B cell (primary cell): ENCODE measurements at regions of chr1 and their contacts with region 1.

Region 1: DNA sequence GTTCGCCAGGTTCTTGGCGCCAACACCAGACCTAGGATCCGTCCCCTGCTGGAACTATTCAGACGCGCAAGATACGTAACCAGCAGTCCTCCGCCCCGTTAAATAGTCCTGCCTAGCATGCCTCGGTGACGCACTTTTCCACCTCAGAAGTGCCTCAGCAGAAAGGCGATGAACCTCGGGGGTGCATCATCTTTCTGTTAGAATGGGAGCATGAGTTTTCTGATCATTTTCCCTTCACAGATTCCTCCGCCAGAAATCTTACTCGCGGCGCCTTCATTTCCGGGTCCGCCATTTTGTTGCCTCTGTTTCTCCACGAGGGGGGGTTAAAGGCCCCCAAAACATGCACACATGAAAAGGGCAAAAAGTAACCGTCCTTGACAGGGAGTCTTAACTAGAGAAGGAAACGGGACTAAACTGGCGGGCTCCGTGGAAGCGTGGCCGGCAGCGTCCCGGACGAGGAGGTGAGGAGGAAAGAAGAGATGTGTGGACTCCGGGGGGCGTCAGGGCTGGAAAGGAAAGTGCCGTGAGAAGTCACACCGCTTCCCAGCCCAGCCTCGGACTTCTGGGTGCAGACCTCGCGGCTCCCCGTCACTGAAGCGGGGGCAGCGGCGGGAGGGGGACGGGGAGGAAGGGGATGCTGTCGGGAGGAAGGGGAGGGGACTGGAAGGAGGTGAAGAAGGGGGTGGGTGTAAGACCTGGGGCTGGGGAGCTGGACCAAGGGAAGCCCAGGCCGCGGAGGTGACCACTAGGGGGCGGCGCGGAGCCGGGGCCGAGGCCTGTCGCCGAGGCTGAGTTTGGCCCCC is at the start of gene GABPB2:
- DNase-seq: peak; percentile 94
- ATAC-seq: peak; percentile 89
- H3K4me3 ChIP-seq: peak within 1 kb of the TSS; percentile 88 to 99 (median 98)
- H3K4me3 Mint-ChIP-seq: peak within 1 kb of the TSS; percentile 97
- H3K27ac ChIP-seq: peak within 1 kb of the TSS; percentile 93 to 96
- H3K27ac Mint-ChIP-seq: peak within 1 kb of the TSS; percentile 100
- H3K4me1 ChIP-seq: peaks cover 13 to 18% of the 10 kb centered on the region in 2 donors
- H3K4me1 Mint-ChIP-seq: peaks cover 17% of the 10 kb centered on the region
- H3K27me3 ChIP-seq: no peaks in the 10 kb centered on the region
- H3K27me3 Mint-ChIP-seq: no peaks in the 10 kb centered on the region
- CTCF ChIP-seq: peak; percentile 93
- total RNA-seq, gene GABPB2: 22.4 and 22.9 TPM in 2 replicates

Region 2: GRCh38 chr1:150708595-150708994 is 362.1 kb before region 1 on chr1:
- CTCF ChIA-PET with region 1: no interaction called
- POLR2A ChIA-PET with region 1: no interaction called
- intact Hi-C with region 1: no loop called
- DNase-seq: no peak
- ATAC-seq: no peak
- H3K4me3 ChIP-seq: no peak overlapping the region
- H3K4me3 Mint-ChIP-seq: no peak overlapping the region
- H3K27ac ChIP-seq: no peak overlapping the region
- H3K27ac Mint-ChIP-seq: no peak overlapping the region
- H3K4me1 ChIP-seq: no peaks in the 10 kb centered on the region
- H3K4me1 Mint-ChIP-seq: no peaks in the 10 kb centered on the region
- H3K27me3 ChIP-seq: no peaks in the 10 kb centered on the region
- H3K27me3 Mint-ChIP-seq: no peaks in the 10 kb centered on the region
- CTCF ChIP-seq: no peak

Region 3: DNA sequence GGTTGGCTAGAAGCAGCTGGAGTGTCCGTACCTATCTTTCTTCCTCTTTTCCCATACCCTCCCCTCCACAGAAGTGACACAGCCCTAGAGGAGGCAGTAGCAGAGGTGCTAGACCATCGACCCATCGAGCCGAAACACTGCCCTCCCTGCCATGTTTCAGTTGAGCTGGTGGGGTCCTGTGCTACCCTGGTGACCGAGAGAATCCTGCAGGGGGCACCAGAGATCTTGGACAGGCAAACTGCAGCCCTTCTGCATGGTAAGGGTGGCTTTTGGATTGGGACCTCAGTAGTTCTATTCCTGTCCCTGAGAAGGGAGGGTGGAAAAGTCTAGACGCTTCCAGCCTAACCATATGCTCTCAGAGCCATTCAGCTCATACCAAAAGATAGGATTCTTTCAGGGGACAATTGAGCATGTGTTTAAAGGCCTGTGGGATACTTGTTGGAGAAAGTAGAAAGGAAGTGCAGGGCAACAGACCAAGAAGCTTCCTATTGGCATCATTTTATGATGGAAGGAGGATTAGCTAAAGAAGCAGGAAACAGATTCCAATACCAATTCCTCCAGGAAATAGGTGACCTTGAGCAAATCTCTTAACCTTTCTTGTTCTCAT is 46.0 kb before region 1 on chr1:
- CTCF ChIA-PET with region 1: interaction called, 11 read pairs
- POLR2A ChIA-PET with region 1: interaction called, 7 read pairs
- intact Hi-C with region 1: loop called (anchors 2 kb)
- DNase-seq: peak; percentile 86
- ATAC-seq: peak; percentile 98
- H3K4me3 ChIP-seq: no peak overlapping the region
- H3K4me3 Mint-ChIP-seq: no peak overlapping the region
- H3K27ac ChIP-seq: no peak overlapping the region
- H3K27ac Mint-ChIP-seq: peak overlapping the region; percentile 72
- H3K4me1 ChIP-seq: peaks cover 0 to 5% of the 10 kb centered on the region in 2 donors
- H3K4me1 Mint-ChIP-seq: peaks cover 6% of the 10 kb centered on the region
- H3K27me3 ChIP-seq: no peaks in the 10 kb centered on the region
- H3K27me3 Mint-ChIP-seq: no peaks in the 10 kb centered on the region
- CTCF ChIP-seq: peak; percentile 85

Region 4: DNA sequence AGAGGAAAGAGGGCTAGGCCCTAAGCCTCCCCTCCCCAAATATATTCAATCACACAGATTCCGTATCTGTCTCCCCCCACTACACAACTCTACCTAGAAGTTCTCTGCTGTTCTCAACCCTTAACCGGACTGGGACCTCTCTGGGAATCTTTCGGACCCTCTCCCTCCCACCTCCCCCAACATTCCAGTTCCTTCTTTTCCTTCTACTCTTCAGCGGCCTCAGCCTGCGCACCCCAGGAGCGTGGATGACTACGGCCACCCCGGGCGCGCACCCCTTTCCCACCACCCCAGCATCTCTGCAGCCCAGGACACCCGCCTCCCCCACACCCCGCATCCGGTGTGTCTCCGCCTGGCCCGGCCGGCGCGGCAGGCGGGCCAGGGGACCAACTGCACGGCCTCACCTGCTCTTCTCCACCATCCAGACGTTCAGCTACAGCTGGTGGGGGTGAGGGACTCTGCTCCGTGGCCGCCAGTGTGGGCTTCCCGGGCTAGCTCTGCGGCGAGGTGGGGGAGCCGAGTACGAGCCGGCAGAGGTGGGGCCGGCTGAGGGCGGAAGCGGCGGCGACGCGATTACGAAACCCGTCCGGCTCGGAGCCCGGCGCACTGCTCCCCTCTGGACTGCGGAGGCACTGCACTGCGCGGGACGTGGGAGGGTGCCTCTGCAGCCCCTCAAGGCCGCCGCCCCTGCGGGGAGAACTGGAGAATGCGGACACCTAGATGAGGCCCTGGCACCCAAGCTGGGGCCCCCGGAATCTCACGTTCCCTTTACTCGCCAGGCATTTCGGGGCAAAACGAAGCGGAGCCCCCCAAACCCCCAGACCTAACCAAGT is 11.4 kb before region 1 on chr1 and contains the start of gene CDC42SE1:
- CTCF ChIA-PET with region 1: interaction called, 82 read pairs
- POLR2A ChIA-PET with region 1: interaction called, 36 read pairs
- intact Hi-C with region 1: loop called (anchors 1 kb)
- DNase-seq: peak; percentile 92
- ATAC-seq: peak; percentile 85
- H3K4me3 ChIP-seq: peak within 1 kb of the TSS; percentile 87 to 99 (median 97)
- H3K4me3 Mint-ChIP-seq: peak within 1 kb of the TSS; percentile 99
- H3K27ac ChIP-seq: peak within 1 kb of the TSS; percentile 76 to 95
- H3K27ac Mint-ChIP-seq: peak within 1 kb of the TSS; percentile 94
- H3K4me1 ChIP-seq: peaks cover 42 to 46% of the 10 kb centered on the region in 2 donors
- H3K4me1 Mint-ChIP-seq: peaks cover 51% of the 10 kb centered on the region
- H3K27me3 ChIP-seq: no peaks in the 10 kb centered on the region
- H3K27me3 Mint-ChIP-seq: no peaks in the 10 kb centered on the region
- CTCF ChIP-seq: peak; percentile 85
- total RNA-seq, gene CDC42SE1: 230 and 238 TPM in 2 replicates

Region 5: DNA sequence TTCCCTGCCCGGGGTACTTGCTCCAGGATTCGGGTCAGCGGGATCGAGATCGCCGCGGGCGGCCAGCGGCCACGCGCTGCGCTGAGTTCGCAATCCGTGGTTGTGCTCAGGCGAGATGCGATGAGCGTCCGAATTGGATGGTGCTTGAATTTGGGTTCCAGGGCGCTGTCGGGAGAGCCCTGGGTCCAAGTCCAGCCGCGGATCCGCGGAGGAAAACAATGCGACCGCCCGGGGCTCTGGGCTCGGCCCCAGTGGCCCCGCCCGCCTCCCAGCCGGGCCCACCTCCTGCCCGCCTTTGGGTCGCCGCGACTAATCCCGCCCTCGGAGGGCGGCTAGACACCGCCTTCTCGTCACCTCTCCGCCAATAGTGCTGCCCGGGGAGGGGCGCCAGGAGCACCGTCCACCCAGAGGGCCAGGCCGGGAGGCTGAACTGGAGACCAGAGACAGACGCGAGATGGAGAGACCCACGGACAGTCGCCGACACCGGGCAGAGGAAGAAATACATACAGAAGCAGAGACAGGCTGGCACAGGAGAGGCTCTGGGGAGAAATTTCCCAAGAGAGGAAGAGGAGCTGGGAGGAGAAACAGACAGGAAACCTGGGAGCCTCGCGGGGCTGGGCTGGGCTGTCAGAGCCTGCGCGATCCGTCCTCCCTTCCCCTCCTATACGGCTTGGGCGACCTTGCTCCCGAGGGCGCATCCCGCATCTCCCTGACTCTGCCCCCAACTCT is 75.9 kb after region 1 on chr1 and contains the start of gene SEMA6C:
- CTCF ChIA-PET with region 1: interaction called, 3 read pairs
- POLR2A ChIA-PET with region 1: no interaction called
- intact Hi-C with region 1: loop called (anchors 2 kb)
- DNase-seq: peak; percentile 86
- ATAC-seq: peak; percentile 100
- H3K4me3 ChIP-seq: peak within 1 kb of the TSS; percentile 59 to 86 (median 84)
- H3K4me3 Mint-ChIP-seq: peak within 1 kb of the TSS; percentile 94
- H3K27ac ChIP-seq: peak within 1 kb of the TSS in 1 of 2 donors; percentile 43
- H3K27ac Mint-ChIP-seq: peak within 1 kb of the TSS; percentile 20
- H3K4me1 ChIP-seq: peaks cover 15 to 19% of the 10 kb centered on the region in 2 donors
- H3K4me1 Mint-ChIP-seq: peaks cover 23% of the 10 kb centered on the region
- H3K27me3 ChIP-seq: peaks cover 0 to 20% (median 8%) of the 10 kb centered on the region in 4 experiments
- H3K27me3 Mint-ChIP-seq: peaks cover 9% of the 10 kb centered on the region
- CTCF ChIP-seq: no peak
- total RNA-seq, gene SEMA6C: 0.86 and 1.5 TPM in 2 replicates

Region 6: DNA sequence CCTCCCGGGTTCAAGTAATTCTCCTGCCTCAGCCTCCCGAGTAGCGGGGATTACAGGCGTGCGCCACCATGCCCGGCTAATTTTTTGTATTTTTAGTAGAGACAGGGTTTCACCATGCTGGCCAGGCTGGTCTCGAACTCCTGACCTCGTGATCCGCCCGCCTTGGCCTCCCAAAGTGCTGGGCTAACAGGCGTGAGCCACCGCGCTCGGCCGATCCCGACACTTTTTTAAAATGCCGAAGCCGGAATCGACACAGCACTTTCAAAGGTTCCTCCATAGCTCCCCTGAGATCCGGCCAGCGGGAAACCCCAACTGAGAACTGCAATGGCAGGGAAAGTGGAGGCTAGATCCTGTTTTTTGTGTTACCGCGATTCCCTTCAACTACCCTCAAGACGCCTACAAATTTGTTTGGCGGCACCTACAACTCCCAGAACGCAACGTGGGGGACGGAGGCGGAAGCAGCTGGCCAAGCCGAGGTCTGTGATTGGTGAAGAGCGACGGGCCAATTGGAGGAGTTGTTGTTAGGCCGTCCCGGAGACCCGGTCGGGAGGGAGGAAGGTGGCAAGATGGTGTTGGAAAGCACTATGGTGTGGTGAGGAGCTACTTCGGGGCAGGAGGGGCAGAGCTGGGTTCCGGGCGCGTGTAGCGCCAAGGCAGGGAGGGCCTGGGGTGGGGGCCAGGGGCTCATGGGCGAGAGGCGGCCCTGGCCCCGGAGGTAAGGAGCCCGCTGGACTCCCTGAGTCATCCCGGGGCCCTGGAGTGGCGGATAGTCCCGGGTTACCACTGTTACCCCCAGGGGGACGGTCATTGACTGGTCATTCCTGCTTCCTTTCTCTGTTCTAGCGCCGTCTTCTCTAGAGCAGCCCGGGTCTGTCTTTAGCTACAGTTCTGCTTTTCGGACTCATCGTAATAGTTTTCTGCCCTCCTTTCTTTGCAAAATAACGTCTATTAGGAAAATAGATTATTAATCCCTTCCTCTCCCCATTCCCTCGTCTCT is 183.8 kb after region 1 on chr1 and contains the start of gene PSMD4:
- CTCF ChIA-PET with region 1: interaction called, 4 read pairs
- POLR2A ChIA-PET with region 1: no interaction called
- intact Hi-C with region 1: loop called (anchors 5 kb)
- DNase-seq: peak; percentile 96
- ATAC-seq: peak; percentile 93
- H3K4me3 ChIP-seq: peak within 1 kb of the TSS; percentile 82 to 97 (median 84)
- H3K4me3 Mint-ChIP-seq: peak within 1 kb of the TSS; percentile 97
- H3K27ac ChIP-seq: peak within 1 kb of the TSS; percentile 66 to 85
- H3K27ac Mint-ChIP-seq: peak within 1 kb of the TSS; percentile 97
- H3K4me1 ChIP-seq: peaks cover 9 to 12% of the 10 kb centered on the region in 2 donors
- H3K4me1 Mint-ChIP-seq: peaks cover 30% of the 10 kb centered on the region
- H3K27me3 ChIP-seq: no peaks in the 10 kb centered on the region
- H3K27me3 Mint-ChIP-seq: no peaks in the 10 kb centered on the region
- CTCF ChIP-seq: no peak
- total RNA-seq, gene PSMD4: 142 and 169 TPM in 2 replicates